Panc1 (cell line): ENCODE measurements at regions of chr11 and their contacts with region 1.

Region 1: GRCh38 chr11:38553148-38553547 is 1955.1 kb upstream of the RAG2 start:
- DNase-seq: no peak
- ATAC-seq: no peak
- H3K4me3 ChIP-seq: no peak overlapping the region
- H3K27ac ChIP-seq: no peak overlapping the region
- H3K4me1 ChIP-seq: no peaks in the 10 kb centered on the region
- H3K27me3 ChIP-seq: no peaks in the 10 kb centered on the region
- CTCF ChIP-seq: no peak

Region 2: DNA sequence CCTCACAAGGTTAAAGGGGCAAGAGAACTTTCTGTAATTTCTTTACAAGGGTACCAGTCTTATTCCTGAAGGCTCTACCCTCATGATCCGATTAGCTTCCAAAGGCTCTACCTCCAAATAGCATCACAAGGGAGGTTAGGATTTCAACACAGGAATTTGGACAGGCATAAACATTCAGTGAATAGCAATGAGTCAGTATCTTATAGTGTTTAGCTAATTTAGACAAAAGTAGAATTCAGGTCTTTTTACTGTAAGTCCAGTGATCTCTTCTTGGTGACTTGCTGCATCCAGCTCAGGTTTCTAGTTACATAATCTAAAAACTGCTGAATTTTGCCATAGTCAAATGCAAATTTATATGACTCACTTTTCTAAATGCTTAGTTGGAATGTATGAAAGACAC is 40.5 kb after region 1 on chr11:
- CTCF ChIA-PET with region 1: no interaction called
- POLR2A ChIA-PET with region 1: no interaction called
- in situ Hi-C with region 1: no loop called
- intact Hi-C with region 1: loop called (anchors 5 kb)
- DNase-seq: no peak
- ATAC-seq: no peak
- H3K4me3 ChIP-seq: no peak overlapping the region
- H3K27ac ChIP-seq: no peak overlapping the region
- H3K4me1 ChIP-seq: no peaks in the 10 kb centered on the region
- H3K27me3 ChIP-seq: no peaks in the 10 kb centered on the region
- CTCF ChIP-seq: no peak